Calu3 (cell line): ENCODE measurements at regions of chr17 and their contacts with region 1.

Region 1: GRCh38 chr17:4834681-4835020 is 1.5 kb downstream of the MINK1 start:
- DNase-seq: peak; percentile 12
- H3K4me3 Mint-ChIP-seq: peak overlapping the region; percentile 93
- H3K27ac Mint-ChIP-seq: peak overlapping the region; percentile 88
- H3K4me1 Mint-ChIP-seq: peaks cover 28% of the 10 kb centered on the region
- H3K27me3 Mint-ChIP-seq: no peaks in the 10 kb centered on the region
- CTCF ChIP-seq: no peak

Region 2: DNA sequence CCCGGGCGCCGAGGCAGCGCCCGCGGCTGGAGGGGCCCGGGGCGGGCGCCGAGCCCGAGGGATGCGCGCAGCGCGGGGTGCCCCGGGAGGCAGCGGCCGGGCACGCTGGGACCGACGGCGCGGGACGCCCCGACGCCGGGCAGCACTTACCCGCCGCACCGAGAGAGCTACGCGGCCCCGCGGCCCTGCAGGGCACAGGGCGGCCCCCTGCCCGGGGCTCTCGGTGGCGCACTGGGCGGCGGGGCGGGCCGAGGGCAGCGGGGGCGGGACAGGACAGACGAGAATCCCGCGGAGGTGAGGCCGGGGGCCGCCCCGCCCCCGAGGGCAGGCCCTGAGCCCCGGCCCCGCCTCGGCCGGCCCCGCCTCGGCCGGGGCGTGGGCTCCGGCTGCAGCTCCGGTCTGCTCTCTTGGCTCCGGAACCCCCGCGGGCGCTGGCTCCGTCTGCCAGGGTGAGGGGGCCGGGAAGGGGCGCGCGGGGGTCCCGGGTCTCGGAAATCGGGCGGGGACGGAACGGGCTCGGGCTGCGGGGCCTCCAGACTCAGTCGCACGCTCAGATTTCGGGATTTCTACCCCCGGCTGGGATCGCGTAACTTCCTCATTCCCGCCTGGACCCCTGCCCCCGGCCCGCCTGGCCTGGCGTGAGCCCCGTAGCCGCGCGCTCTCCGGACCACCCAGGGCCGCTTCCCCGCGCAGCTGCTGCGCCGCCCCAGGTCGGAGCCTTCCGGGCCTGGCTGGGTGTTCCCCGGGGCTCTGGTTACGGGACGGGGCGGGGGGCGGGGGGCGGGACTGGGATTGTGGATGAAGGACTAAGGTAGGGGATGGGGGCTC is 27.7 kb before region 1 on chr17 and contains the start of gene PLD2:
- CTCF ChIA-PET with region 1: no interaction called
- intact Hi-C with region 1: no loop called
- DNase-seq: peak; percentile 87
- H3K4me3 Mint-ChIP-seq: peak within 1 kb of the TSS; percentile 66
- H3K27ac Mint-ChIP-seq: no peak within 1 kb of the TSS
- H3K4me1 Mint-ChIP-seq: peaks cover 12% of the 10 kb centered on the region
- H3K27me3 Mint-ChIP-seq: no peaks in the 10 kb centered on the region
- CTCF ChIP-seq: no peak
- total RNA-seq, gene PLD2: 11.0 and 13.0 TPM in 2 replicates

Region 3: DNA sequence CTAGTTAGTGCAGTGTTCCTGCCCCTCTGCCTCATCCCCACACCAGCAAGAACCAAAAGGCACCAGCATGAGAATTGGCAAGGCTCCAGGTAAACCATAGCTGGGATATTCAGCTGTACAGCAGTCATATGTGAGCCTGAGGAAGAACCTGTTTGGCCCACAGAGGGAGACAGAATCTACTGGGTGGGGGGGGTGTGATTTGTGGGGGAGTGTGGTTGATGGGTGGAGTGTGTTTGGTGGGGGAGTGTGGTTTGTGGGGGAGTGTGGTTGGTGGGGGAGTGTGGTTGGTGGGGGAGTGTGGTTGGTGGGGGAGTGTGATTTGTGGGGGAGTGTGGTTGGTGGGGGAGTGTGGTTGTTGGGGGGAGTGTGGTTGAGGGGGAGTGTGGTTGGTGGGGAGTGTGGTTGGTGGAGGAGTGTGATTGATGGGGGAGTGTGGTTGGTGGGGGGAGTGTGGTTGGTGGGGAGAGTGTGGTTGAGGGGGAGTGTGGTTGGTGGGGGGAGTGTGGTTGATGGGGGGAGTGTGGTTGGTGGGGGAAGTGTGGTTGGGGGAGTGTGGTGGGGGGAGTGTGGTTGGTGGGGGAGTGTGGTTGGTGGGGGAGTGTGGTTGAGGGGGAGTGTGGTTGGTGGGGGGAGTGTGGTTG is 18.0 kb after region 1 on chr17:
- CTCF ChIA-PET with region 1: no interaction called
- intact Hi-C with region 1: loop called (anchors 1 kb)
- DNase-seq: peak; percentile 25
- H3K4me3 Mint-ChIP-seq: no peak overlapping the region
- H3K27ac Mint-ChIP-seq: peak overlapping the region; percentile 62
- H3K4me1 Mint-ChIP-seq: peaks cover 65% of the 10 kb centered on the region
- H3K27me3 Mint-ChIP-seq: no peaks in the 10 kb centered on the region
- CTCF ChIP-seq: no peak

Region 4: GRCh38 chr17:4997302-4998026 is 162.8 kb after region 1 on chr17 and contains the starts of genes INCA1 and KIF1C:
- CTCF ChIA-PET with region 1: no interaction called
- intact Hi-C with region 1: no loop called
- DNase-seq: peak; percentile 87
- H3K4me3 Mint-ChIP-seq: peak within 1 kb of the TSS; percentile 87
- H3K27ac Mint-ChIP-seq: peak within 1 kb of the TSS; percentile 68
- H3K4me1 Mint-ChIP-seq: peaks cover 17% of the 10 kb centered on the region
- H3K27me3 Mint-ChIP-seq: no peaks in the 10 kb centered on the region
- CTCF ChIP-seq: no peak
- total RNA-seq, gene INCA1: 0.54 TPM in 1 of 2 replicates, not detected in the other
- total RNA-seq, gene KIF1C: 65.9 and 69.4 TPM in 2 replicates